ENCODE measurements at regions of chr7 and their contacts with region 1.

Region 1: GRCh38 chr7:130982160-130982638 is 248.2 kb upstream of the KLF14 start:
- DNase-seq: peak; percentile 50
- CTCF ChIP-seq: peak; percentile 59

Region 2: DNA sequence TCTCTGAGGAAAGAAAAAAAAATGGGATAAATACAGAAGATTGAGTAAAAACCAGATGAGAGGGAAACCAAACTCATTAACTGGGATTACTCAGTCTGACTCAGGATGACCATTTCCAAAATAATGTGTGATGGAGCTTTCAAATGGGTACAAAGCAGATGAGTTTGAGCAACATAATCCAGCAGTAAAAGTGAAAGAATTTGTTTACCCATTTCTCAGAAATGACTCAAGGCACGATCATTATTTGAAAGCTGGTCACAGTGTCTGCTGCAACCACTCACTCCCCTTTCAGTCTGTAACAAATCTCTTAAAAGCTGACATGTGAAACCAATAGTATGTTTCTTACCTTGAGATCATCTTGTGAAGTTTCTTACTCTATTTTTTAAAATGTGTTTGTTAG is 143.5 kb before region 1 on chr7:
- CTCF ChIA-PET with region 1: no interaction called
- POLR2A ChIA-PET with region 1: no interaction called
- DNase-seq: peak; percentile 46
- CTCF ChIP-seq: no peak

Region 3: GRCh38 chr7:130966246-130967009 is 15.8 kb before region 1 on chr7:
- CTCF ChIA-PET with region 1: interaction called, 36 read pairs
- POLR2A ChIA-PET with region 1: no interaction called
- DNase-seq: no peak
- CTCF ChIP-seq: no peak

Region 4: DNA sequence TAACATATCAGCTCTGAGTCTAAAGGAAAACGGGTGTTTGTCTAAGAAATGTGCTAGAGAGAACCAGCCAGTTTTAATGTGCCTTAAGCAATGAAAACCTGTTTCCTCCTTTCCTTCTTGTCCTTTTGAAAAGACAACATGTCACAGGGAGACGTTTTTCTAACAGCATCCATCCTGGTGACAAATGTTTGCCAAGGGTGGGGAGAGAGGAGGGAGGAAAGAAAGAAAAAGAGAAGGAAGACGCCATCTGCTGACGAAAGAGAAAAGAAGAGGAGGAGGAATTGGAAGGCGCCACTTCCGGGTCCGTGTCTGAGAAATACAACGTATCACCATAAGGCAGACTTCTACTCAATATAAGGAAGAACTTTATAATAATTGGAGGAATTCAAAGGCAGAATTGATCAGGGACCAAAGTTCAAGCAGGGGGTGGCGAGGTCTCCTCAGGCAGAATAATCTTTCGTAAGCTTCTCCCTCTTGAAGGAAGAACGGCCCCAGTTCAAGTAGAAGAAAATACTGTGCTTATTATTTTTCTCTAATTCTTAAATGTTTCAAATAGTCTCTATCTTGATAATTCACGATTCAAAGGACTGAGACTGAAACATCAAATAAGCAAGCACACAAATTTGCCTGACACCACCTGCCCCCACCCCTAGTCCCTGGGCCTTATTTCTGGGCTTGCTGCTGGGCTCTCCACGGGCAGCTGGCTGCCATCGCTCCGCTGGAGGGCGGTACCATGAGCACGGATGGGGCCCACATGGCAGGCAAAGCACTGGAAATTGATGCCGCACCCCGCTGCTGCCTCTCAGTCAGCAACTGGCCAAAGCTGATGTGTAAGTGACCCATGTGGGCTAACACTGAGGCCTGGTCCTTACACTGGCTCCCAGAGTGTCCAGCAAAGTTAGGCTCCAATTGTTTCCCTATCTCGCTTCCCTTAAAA is 25.5 kb after region 1 on chr7:
- CTCF ChIA-PET with region 1: interaction called, 47 read pairs
- POLR2A ChIA-PET with region 1: no interaction called
- DNase-seq: peak; percentile 55
- CTCF ChIP-seq: peak; percentile 53

Region 5: GRCh38 chr7:131027287-131027773 is 45.1 kb after region 1 on chr7:
- CTCF ChIA-PET with region 1: interaction called, 11 read pairs
- POLR2A ChIA-PET with region 1: no interaction called
- DNase-seq: peak; percentile 24
- CTCF ChIP-seq: no peak

Measured in GM10248 (cell line).